Posterior vena cava (tissue), 2 donors: ENCODE measurements at regions of chr4 and their contacts with region 1.

Region 1: GRCh38 chr4:17576932-17577665 is at the start of gene LAP3:
- DNase-seq: peak; percentile 99
- total RNA-seq, gene LAP3: 70.4 to 72.4 TPM

Region 2: DNA sequence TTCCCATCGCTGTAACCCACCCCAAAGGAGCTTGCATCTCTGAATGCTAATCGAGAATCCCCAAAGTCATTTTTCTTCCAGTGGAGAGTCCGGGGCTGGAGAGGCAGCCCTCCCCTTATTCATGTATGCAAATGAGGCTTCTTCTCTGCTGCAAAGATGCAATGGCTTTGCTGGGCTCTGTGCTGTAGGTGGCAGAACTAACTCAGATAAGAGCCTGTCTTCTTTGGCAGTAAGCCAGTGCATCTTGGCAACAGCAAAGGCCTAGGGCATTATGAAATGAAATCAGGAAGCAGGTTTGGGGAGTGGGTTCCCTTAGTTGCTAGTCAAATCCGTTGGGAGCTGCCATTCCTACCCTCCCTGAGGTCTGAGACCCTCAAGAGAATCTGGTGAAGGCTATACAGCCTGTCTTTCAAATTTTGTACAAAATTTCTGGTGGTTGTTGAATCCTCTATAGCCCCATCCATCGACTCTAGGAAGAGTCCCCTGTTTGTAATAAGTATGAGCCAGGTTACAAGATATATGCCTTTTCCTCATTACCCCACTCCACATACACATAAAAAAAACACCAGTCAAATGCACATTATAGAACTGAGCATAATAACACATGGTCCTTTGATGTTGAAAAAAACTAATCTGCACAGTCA is 1060.2 kb before region 1 on chr4:
- intact Hi-C with region 1: no loop called
- DNase-seq: no peak

Region 3: DNA sequence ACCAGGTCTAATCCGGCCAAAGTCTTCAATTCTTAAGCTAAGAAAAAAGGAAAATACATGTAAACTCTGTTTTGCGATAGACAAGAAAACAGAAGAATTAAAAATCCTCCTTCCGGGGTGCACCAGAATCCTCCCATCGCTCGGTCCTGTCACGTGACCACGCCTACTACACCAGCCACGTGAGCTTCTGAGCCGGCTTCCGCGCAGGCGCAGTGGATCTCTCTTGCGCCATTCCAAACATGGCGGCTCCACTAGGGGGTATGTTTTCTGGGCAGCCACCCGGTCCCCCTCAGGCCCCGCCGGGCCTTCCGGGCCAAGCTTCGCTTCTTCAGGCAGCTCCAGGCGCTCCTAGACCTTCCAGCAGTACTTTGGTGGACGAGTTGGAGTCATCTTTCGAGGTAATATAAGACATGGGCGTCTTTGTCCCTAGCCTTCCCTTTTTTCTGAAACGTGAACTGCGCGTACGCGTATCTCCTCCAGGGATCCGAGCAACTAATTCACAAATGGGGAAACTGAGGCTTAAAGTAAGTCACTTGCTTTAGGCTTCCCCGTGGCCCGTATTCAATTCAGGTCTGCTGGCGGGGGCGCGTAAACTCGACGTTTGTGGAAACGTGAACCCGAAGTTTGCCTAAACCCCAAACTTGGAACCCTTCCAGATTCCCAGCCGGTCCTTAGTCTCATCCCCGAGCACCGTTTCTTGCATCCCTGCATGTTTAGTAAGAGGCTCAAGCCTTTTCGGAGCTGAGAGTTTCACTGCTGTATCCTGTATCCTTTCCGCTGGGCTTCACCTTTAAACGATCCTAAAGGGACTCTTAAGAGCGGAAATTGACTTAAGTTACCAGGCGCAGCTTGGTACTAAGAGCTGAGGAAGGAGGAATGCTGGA is 37.6 kb after region 1 on chr4 and contains the start of gene MED28:
- intact Hi-C with region 1: loop called in 1 of 2 experiments (anchors 5 kb)
- DNase-seq: peak; percentile 99
- total RNA-seq, gene MED28: 34.4 to 41.6 TPM